ENCODE measurements at regions of chr10 and their contacts with region 1.

Region 1: GRCh38 chr10:71850637-71851464 is at the start of gene PSAP:
- DNase-seq: peak; percentile 100
- H3K4me3 Mint-ChIP-seq: peak within 1 kb of the TSS; percentile 90
- H3K27ac Mint-ChIP-seq: peak within 1 kb of the TSS; percentile 83
- H3K4me1 Mint-ChIP-seq: peaks cover 47% of the 10 kb centered on the region
- H3K27me3 Mint-ChIP-seq: no peaks in the 10 kb centered on the region
- CTCF ChIP-seq: no peak
- total RNA-seq, gene PSAP: 840 and 1,050 TPM in 2 replicates

Region 2: GRCh38 chr10:71790749-71791552 is 59.9 kb before region 1 on chr10:
- CTCF ChIA-PET with region 1: no interaction called
- intact Hi-C with region 1: loop called (anchors 2 kb)
- DNase-seq: no peak
- H3K4me3 Mint-ChIP-seq: no peak overlapping the region
- H3K27ac Mint-ChIP-seq: no peak overlapping the region
- H3K4me1 Mint-ChIP-seq: no peaks in the 10 kb centered on the region
- H3K27me3 Mint-ChIP-seq: peaks cover 50% of the 10 kb centered on the region
- CTCF ChIP-seq: no peak

Region 3: GRCh38 chr10:71868192-71868697 is 17.4 kb after region 1 on chr10:
- CTCF ChIA-PET with region 1: interaction called, 12 read pairs
- intact Hi-C with region 1: no loop called
- DNase-seq: peak; percentile 80
- H3K4me3 Mint-ChIP-seq: peak overlapping the region; percentile 25
- H3K27ac Mint-ChIP-seq: peak overlapping the region; percentile 71
- H3K4me1 Mint-ChIP-seq: peaks cover 27% of the 10 kb centered on the region
- H3K27me3 Mint-ChIP-seq: no peaks in the 10 kb centered on the region
- CTCF ChIP-seq: no peak

Region 4: GRCh38 chr10:71888623-71889387 is 38.0 kb after region 1 on chr10:
- CTCF ChIA-PET with region 1: interaction called, 7 read pairs
- intact Hi-C with region 1: loop called (anchors 5 kb)
- DNase-seq: peak; percentile 68
- H3K4me3 Mint-ChIP-seq: peak overlapping the region; percentile 75
- H3K27ac Mint-ChIP-seq: peak overlapping the region; percentile 60
- H3K4me1 Mint-ChIP-seq: peaks cover 25% of the 10 kb centered on the region
- H3K27me3 Mint-ChIP-seq: no peaks in the 10 kb centered on the region
- CTCF ChIP-seq: no peak